Activated CD8-positive, alpha-beta memory T cell treated with anti-CD3 and anti-CD28 coated beads, Interleukin-2, amount 10 ng/mL, durations not matched to agents 7 days and 5 days (primary cell): ENCODE measurements at regions of chr1 and their contacts with region 1.

Region 1: DNA sequence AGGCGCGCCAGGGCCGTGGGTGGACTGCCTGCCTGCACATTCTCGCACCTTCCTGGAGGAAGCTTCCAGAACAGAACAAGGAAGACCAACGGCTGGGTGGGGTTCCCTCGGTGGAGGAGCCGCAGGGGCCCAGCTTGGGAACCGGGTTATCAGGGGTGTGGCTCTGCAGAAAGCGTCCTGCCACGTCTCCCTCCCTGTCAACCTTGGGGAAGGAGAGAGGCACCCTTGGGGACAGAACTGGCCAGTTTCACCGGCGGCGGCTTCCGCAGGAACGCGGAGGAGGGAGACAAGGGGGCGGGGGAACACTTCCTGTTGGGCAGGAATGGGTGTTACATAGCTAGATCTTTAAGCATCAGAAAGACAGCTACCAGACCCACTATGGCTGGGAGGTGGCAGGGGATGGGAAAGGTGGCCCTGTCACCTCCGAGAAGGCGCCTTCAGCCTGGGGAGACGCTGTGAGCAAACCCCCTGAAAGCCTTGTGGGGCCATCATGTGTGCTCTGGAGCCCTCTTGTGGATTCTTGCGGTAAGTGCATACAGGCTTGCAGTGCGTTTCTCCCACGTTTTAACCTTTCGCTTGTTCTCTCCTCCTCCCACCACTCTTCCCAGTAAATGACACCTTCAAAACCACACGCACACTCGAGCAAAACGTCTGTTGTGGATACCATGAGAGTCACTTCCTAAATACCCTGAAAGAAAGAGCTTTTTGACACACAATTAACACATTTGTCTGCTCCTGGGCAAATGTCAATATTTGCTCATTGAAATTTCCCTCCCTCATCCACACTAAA is 3.8 kb upstream of the PLEKHA6 start:
- DNase-seq: peak; percentile 84
- ATAC-seq: peak; percentile 86
- H3K4me3 Mint-ChIP-seq: peak overlapping the region; percentile 46
- H3K27ac Mint-ChIP-seq: peak overlapping the region; percentile 52
- H3K4me1 Mint-ChIP-seq: peaks cover 12% of the 10 kb centered on the region
- H3K27me3 Mint-ChIP-seq: peaks cover 3% of the 10 kb centered on the region

Region 2: DNA sequence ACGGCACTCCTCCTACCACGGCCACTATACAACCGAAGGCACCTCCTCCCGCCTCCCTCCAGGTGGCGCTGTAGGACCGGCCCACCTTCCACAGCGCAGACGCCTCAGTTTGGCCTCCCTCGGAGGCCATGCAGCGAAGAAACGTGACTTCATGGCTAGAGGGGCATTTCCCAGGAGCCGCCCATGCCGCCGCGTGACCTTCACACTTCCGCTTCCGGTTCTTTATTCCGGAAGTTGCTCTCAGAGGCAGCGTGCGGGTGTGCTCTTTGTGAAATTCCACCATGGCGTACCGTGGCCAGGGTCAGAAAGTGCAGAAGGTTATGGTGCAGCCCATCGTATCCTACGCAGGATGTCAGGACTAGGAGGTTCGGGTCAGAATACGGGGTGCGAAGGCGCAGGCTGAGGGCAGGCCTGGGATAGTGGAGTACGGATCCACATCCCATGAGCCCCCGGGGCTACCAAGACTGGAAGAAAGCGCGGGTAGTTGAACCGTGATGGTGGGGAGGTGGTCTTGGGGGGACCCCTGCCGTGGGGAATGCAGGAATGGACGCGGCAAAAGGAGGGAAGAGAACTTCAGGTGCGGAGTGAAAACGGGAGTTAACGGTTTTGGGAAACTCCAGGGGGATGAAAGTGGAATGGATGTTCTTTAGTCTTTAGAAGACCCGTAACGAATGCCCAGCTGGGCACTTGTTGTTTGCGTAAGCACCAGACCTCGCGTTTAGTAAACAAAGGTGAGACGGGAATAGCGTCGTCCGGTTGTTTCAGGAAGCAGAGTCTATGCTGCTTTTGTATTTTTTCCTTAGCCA is 501.9 kb before region 1 on chr1 and contains the start of gene SNRPE:
- CTCF ChIA-PET with region 1: interaction called, 10 read pairs
- DNase-seq: peak; percentile 97
- ATAC-seq: peak; percentile 97
- H3K4me3 Mint-ChIP-seq: peak within 1 kb of the TSS; percentile 98
- H3K27ac Mint-ChIP-seq: peak within 1 kb of the TSS; percentile 95
- H3K4me1 Mint-ChIP-seq: peaks cover 25% of the 10 kb centered on the region
- H3K27me3 Mint-ChIP-seq: no peaks in the 10 kb centered on the region
- total RNA-seq, gene SNRPE: 167 to 209 TPM

Region 3: DNA sequence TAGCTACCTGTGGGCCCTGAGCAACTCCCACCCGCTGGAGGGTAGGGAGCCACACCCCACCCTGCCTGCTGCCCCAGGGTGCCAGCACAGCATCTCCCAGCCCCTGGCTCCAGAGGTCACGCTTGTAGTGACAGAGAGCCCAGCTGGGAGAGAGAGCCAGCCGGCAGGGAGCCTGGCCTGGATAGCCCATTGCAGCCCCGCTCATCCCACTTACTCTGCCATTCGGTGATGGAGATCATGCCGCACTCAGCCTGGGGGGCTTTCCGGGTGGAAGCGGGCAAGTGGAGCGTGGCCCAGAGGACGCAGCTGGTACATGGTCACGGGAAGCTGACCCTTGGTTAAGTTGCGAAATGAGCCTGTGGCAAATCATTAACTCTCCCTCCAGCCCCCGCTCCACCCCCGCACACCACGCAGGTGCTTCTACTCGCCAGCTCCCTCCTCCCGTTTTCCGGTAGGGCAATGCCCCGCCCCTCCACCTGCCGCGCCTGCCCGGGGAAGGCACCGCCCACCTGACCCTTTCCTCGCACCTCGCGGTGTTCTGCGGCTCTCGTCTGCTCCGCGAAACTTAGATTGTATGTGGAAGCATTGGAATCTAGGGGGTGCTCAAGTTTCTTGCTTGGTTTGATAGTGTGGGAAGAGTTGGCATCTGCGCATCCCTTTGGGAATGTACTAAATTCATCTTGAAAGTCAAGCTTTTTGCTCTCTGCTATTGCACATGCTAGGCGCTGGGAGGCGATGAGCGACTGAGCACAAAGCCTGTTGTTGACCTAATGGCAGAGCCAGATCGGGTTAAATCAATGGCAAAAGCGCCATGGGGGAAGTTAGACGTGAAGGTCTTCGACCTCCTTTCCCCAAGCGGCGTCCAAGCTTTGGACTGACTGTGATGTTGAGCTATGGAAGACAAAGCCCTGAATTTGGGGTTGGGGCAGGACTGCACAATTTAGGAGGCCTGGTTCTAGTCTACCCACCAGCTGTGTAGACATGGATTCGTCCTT is 149.6 kb before region 1 on chr1 and contains the start of gene GOLT1A:
- CTCF ChIA-PET with region 1: interaction called, 18 read pairs
- DNase-seq: peak; percentile 53
- ATAC-seq: peak; percentile 42
- H3K4me3 Mint-ChIP-seq: peak within 1 kb of the TSS; percentile 5
- H3K27ac Mint-ChIP-seq: no peak within 1 kb of the TSS
- H3K4me1 Mint-ChIP-seq: peaks cover 15% of the 10 kb centered on the region
- H3K27me3 Mint-ChIP-seq: peaks cover 23% of the 10 kb centered on the region
- total RNA-seq, gene GOLT1A: not detected

Region 4: DNA sequence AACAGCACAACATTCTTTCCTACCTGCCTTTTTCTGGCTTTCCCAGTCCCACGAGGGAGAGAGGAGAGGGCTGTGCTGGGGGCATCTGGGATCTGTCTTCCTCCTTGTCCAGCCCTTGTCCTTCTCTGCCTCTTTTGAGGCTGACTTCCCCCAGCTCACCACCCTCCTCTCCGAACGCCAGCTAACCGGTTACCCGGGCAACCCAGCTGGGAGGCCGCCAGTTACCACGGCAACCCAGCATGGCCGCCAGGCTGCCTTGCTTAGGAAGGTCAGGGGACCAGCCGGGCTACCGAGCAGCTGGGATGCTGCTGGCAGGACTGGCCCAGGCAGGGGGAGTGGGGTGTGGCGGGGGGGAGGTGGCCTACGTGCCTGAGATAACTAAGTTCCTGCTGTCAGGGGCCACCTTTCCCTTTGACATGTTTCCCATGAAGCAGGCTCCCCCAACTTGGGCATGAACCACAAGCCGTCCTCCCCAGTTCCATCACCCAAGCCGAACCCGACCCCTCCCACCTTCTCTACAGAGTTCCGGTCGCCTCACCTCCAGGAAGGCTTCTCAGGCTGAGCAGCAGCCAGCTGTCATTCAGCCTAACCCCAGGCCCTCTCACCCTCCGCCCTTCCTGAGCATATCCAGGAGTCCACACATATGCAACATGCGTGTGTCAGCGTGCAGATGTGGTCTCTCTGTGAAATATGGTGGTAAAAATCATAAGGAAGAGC is 12.5 kb before region 1 on chr1:
- CTCF ChIA-PET with region 1: interaction called, 17 read pairs
- DNase-seq: no peak
- ATAC-seq: peak; percentile 16
- H3K4me3 Mint-ChIP-seq: no peak overlapping the region
- H3K27ac Mint-ChIP-seq: no peak overlapping the region
- H3K4me1 Mint-ChIP-seq: no peaks in the 10 kb centered on the region
- H3K27me3 Mint-ChIP-seq: peaks cover 6% of the 10 kb centered on the region

Region 5: GRCh38 chr1:204398217-204399081 is 34.9 kb after region 1 on chr1:
- CTCF ChIA-PET with region 1: interaction called, 17 read pairs
- DNase-seq: peak; percentile 75
- ATAC-seq: peak; percentile 84
- H3K4me3 Mint-ChIP-seq: no peak overlapping the region
- H3K27ac Mint-ChIP-seq: no peak overlapping the region
- H3K4me1 Mint-ChIP-seq: peaks cover 2% of the 10 kb centered on the region
- H3K27me3 Mint-ChIP-seq: no peaks in the 10 kb centered on the region